A673 (cell line): ENCODE measurements at regions of chr11 and their contacts with region 1.

Region 1: GRCh38 chr11:95764267-95764898 is 25.2 kb downstream of the FAM76B start:
- DNase-seq: peak; percentile 77
- H3K4me3 ChIP-seq: no peak overlapping the region
- H3K27ac ChIP-seq: no peak overlapping the region
- H3K4me1 ChIP-seq: no peaks in the 10 kb centered on the region
- H3K27me3 ChIP-seq: no peaks in the 10 kb centered on the region
- CTCF ChIP-seq: peak; percentile 86

Region 2: DNA sequence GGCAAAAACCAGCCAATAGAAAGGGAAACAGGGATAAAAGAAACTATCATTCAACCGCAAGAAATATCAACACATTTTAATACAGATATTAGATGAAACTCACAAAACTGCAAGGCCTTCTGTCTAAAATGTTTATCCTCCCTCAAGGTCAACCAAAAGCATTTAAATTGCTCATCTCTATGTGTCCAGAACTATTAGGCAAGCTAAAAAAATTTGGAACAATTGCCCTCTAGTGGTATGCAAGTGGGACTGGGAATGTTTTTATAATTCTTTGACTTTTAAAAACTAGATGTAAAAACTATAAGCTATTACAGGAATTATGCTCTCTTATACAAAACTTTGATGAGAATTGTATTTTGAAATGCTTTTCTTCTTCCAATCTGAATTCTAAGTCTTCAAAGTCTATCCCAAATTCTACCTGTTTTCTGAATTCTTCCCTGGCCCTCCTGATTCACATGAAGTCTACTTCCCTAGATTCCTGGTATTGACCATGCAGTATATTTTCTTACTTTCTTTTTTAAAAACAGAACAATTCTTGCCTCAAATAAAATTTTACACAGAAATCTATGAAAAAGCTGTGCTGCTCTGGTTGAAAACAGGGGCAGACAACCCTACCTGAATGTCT is 795.9 kb before region 1 on chr11:
- CTCF ChIA-PET with region 1: no interaction called
- POLR2A ChIA-PET with region 1: no interaction called
- intact Hi-C with region 1: loop called (anchors 5 kb)
- DNase-seq: peak; percentile 51
- H3K4me3 ChIP-seq: no peak overlapping the region
- H3K27ac ChIP-seq: no peak overlapping the region
- H3K4me1 ChIP-seq: peaks cover 10% of the 10 kb centered on the region
- H3K27me3 ChIP-seq: no peaks in the 10 kb centered on the region
- CTCF ChIP-seq: peak; percentile 77

Region 3: DNA sequence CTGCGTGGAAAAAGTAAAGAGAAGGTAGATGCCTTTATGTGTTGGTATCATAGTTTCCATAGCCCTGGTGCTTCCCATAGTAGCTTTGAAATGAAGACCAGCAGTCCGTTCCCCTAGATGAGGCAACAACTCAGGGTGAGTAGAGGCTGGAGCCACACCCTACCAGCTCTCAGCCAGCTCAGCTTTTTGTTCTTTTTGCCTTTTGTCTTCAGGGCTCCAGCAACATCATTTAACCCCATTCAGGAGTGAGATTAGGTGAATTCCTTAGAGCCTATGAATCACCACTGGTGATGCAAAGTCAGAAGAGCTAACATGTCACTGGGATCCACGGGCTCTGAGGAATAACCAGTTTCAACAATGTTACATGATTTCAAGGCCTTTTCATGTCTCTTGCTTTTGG is 519.3 kb before region 1 on chr11:
- CTCF ChIA-PET with region 1: interaction called, 10 read pairs
- POLR2A ChIA-PET with region 1: no interaction called
- intact Hi-C with region 1: no loop called
- DNase-seq: no peak
- H3K4me3 ChIP-seq: no peak overlapping the region
- H3K27ac ChIP-seq: no peak overlapping the region
- H3K4me1 ChIP-seq: peaks cover 4% of the 10 kb centered on the region
- H3K27me3 ChIP-seq: no peaks in the 10 kb centered on the region
- CTCF ChIP-seq: no peak

Region 4: DNA sequence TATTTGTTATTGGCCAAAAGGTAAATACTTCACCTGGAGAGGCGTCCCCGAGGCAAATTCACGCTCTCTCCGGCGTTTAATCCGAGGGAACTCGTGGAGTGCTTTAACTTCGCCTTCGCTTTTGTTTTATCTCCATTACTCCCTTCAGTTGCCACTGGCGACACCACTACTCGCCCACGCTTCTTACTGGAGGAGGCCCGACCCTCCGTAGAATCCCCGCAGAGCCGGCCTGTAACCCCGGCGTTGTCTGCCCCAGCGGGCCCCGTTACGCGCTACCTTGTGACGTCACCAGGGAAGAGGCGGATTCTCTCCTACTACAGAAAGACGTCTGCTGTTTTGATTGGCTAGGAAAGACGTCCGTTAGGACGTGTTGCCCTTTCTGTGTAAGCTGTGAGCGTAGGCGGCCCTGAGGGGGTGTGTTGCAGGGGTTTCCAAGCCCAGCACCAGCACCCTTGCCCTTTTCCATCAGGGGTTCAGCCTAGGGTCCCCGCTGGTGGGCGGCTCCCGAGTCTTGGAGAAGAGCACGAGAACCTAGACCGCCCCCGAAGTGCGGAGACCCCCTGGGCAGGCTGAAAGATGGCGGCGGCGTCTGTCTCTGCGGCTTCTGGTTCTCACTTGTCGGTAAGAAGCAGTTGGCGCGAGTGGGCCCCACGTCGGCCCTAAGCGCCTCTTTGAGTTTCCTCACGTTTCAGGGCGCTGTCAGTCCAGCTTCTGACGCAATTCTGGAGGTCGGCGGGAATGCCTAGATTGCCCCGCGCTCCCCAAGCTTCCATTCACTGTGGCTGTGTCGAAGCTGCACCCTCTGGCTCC is 25.9 kb after region 1 on chr11 and contains the start of gene CEP57:
- CTCF ChIA-PET with region 1: interaction called, 10 read pairs
- POLR2A ChIA-PET with region 1: no interaction called
- intact Hi-C with region 1: no loop called
- DNase-seq: peak; percentile 99
- H3K4me3 ChIP-seq: peak within 1 kb of the TSS; percentile 91
- H3K27ac ChIP-seq: peak within 1 kb of the TSS; percentile 97
- H3K4me1 ChIP-seq: peaks cover 47% of the 10 kb centered on the region
- H3K27me3 ChIP-seq: no peaks in the 10 kb centered on the region
- CTCF ChIP-seq: no peak
- total RNA-seq, gene CEP57: 72.3 and 79.8 TPM in 2 replicates

Region 5: GRCh38 chr11:95917193-95918036 is 153.0 kb after region 1 on chr11:
- CTCF ChIA-PET with region 1: no interaction called
- POLR2A ChIA-PET with region 1: no interaction called
- intact Hi-C with region 1: no loop called
- DNase-seq: no peak
- H3K4me3 ChIP-seq: no peak overlapping the region
- H3K27ac ChIP-seq: no peak overlapping the region
- H3K4me1 ChIP-seq: peaks cover 5% of the 10 kb centered on the region
- H3K27me3 ChIP-seq: no peaks in the 10 kb centered on the region
- CTCF ChIP-seq: no peak